Activated naive CD8-positive, alpha-beta T cell treated with anti-CD3 and anti-CD28 coated beads, Interleukin-2, amount 10 ng/mL, durations not matched to agents 7 days and 5 days (primary cell): ENCODE measurements at regions of chr4 and their contacts with region 1.

Region 1: DNA sequence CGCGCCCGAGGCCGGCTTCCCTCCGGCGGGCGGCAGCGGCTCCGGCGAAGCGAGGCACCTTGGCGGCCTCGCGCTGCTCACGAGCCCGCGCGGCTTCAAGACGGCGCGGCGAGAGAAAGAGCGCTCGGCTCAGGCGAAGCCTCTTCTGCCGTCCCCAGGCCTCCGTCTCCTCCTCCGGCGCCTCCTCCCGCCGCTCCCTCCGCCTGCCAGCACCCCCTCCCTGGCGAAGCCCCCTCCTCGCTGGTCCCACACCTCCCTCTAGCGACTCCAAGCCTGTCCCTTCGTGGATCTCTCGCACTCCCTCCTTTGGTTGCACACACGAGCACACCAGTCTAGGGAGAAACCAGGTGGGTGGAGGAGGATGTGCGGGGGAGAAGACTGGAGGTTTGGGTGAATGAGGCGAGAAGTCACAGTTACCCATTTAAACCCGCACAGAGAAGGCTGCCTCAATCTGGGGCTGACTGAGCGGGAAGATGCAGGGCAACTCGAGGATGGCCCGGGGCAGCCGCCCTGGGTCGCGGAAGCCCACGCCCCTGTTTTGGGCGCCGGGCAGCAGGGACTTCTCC is at the start of gene CAMK2D:
- DNase-seq: peak; percentile 85
- ATAC-seq: peak; percentile 58
- H3K4me3 Mint-ChIP-seq: peak within 1 kb of the TSS; percentile 99
- H3K27ac Mint-ChIP-seq: peak within 1 kb of the TSS; percentile 98
- H3K4me1 Mint-ChIP-seq: peaks cover 19% of the 10 kb centered on the region
- H3K27me3 Mint-ChIP-seq: no peaks in the 10 kb centered on the region
- total RNA-seq, gene CAMK2D: 34.8 to 35.5 TPM

Region 2: GRCh38 chr4:113547487-113548042 is 214.1 kb before region 1 on chr4:
- POLR2A ChIA-PET with region 1: interaction called, 17 read pairs
- DNase-seq: peak; percentile 76
- ATAC-seq: peak; percentile 100
- H3K4me3 Mint-ChIP-seq: no peak overlapping the region
- H3K27ac Mint-ChIP-seq: peak overlapping the region; percentile 5
- H3K4me1 Mint-ChIP-seq: peaks cover 10% of the 10 kb centered on the region
- H3K27me3 Mint-ChIP-seq: no peaks in the 10 kb centered on the region

Region 3: DNA sequence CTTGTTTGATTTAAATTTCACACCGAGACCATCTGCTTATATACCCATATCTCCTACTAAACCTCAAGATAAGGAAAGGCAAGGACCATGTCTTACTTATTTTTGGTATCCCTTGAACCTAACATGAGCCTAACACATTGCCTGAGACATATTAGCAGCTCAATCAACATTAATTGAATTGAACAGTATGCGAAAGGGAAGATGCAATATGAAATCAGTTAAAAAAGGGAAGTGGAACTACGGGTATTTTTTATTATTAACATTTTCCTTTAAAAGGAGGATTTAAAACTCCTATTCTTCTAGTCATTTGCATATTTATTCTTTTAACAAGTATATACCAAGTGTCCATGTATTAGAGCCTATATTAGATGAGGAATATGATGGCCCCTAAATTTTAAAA is 197.2 kb before region 1 on chr4:
- POLR2A ChIA-PET with region 1: interaction called, 12 read pairs
- DNase-seq: no peak
- ATAC-seq: no peak
- H3K4me3 Mint-ChIP-seq: peak overlapping the region; percentile 45
- H3K27ac Mint-ChIP-seq: peak overlapping the region; percentile 66
- H3K4me1 Mint-ChIP-seq: peaks cover 34% of the 10 kb centered on the region
- H3K27me3 Mint-ChIP-seq: no peaks in the 10 kb centered on the region

Region 4: DNA sequence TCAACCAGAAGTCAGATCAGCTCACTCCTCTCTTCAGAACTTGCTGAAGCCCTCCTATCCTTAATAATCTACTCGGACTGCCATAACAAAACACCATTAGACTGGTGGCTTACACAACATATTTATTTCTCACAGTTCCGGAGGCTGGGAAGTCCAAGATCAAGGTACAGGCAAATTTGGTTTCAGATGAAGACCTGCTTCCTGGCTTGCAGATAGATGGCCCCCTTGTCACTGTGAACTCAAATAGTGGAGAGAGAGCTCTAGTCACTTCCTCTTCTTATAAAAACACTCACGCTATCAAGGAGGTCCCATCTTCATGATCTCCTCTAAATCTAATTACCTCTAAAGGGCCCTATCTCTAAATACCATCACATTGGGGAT is 125.3 kb before region 1 on chr4:
- POLR2A ChIA-PET with region 1: interaction called, 23 read pairs
- DNase-seq: peak; percentile 23
- ATAC-seq: peak; percentile 91
- H3K4me3 Mint-ChIP-seq: peak overlapping the region; percentile 78
- H3K27ac Mint-ChIP-seq: peak overlapping the region; percentile 90
- H3K4me1 Mint-ChIP-seq: peaks cover 46% of the 10 kb centered on the region
- H3K27me3 Mint-ChIP-seq: no peaks in the 10 kb centered on the region

Region 5: DNA sequence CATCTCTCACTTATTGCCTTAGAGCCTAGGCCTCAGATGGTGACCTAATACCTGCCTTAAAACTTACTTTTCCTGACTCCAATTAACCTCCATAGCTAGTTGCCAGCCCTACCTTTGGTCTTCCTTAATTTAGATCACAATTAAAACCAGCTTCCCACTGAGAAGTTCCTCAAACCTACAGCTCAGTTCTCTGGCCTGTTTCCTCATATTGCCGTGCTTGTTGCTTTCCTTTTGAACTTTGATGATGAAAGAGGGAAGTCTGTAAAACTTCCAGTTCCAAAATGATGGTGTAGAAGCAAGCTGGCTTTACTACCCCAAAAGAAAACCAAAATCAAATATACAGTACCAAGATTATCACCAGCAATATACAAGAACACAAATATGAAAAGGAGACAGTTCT is 28.8 kb after region 1 on chr4:
- POLR2A ChIA-PET with region 1: no interaction called
- DNase-seq: no peak
- ATAC-seq: no peak
- H3K4me3 Mint-ChIP-seq: no peak overlapping the region
- H3K27ac Mint-ChIP-seq: no peak overlapping the region
- H3K4me1 Mint-ChIP-seq: no peaks in the 10 kb centered on the region
- H3K27me3 Mint-ChIP-seq: no peaks in the 10 kb centered on the region